Right cardiac atrium (tissue), 5 donors: ENCODE measurements at regions of chr9 and their contacts with region 1.

Region 1: GRCh38 chr9:104863180-104863883 is 64.6 kb downstream of the ABCA1 start:
- DNase-seq: peak in 2 of 3 donors; percentile 34 to 66
- ATAC-seq: peak; percentile 75 to 84
- H3K4me3 ChIP-seq: no peak overlapping the region
- H3K27ac ChIP-seq: no peak overlapping the region
- H3K4me1 ChIP-seq: no peaks in the 10 kb centered on the region
- H3K27me3 ChIP-seq: no peaks in the 10 kb centered on the region

Region 2: GRCh38 chr9:104694218-104694617 is 169.1 kb before region 1 on chr9 and contains the start of gene OR13D1:
- intact Hi-C with region 1: no loop called
- DNase-seq: no peak
- ATAC-seq: no peak
- H3K4me3 ChIP-seq: no peak within 1 kb of the TSS
- H3K27ac ChIP-seq: no peak within 1 kb of the TSS
- H3K4me1 ChIP-seq: no peaks in the 10 kb centered on the region
- H3K27me3 ChIP-seq: no peaks in the 10 kb centered on the region
- total RNA-seq, gene OR13D1: not detected

Region 3: DNA sequence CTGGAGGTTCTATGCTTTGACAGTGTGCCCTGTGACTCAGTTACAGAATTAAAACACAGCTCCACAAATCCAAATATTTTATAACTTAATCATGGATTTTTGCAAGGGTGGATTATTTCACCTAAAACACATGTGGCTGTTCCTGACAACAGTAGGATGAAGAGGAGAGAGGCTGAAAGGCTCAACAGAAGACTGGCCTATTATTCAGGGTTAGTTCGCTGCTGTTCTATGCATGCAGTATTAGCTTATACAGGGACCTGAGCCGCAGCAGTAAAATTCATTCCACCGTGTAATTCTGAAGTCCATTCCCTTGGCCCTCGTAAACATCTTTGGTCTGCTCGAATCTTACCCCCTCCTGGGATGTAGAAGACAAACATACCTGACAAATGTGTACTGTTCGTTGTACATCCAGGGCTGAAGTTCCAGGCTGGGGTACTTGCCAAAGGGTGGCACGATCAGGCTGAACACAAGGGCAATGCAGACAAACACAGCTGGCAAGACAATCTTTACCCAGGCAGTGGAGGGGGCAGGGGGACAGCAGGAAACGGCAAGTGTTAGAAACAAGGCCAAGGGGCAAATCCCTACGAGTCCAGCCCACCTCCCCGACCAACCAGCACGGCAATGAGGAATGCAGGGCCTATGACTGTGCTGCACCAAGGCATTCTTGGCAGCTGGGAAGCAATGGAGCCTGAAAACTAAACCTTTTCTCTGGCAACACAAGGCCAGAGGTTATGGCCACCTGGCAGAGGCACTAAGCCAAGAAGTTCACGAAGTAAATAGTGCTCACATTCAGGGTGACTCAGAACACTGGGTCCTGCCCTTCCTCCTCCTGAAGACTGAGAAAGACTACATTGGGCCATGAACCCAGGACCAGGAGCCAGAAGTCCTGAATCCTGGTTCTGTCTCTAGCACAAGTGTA is 52.7 kb before region 1 on chr9:
- intact Hi-C with region 1: no loop called
- DNase-seq: no peak
- ATAC-seq: peak in 1 of 2 donors; percentile 43
- H3K4me3 ChIP-seq: no peak overlapping the region
- H3K27ac ChIP-seq: no peak overlapping the region
- H3K4me1 ChIP-seq: no peaks in the 10 kb centered on the region
- H3K27me3 ChIP-seq: no peaks in the 10 kb centered on the region

Region 4: GRCh38 chr9:104911032-104911607 is 47.8 kb after region 1 on chr9:
- intact Hi-C with region 1: loop called in 2 of 4 experiments (anchors 10 kb)
- DNase-seq: no peak
- ATAC-seq: no peak
- H3K4me3 ChIP-seq: no peak overlapping the region
- H3K27ac ChIP-seq: no peak overlapping the region
- H3K4me1 ChIP-seq: peaks cover 20% of the 10 kb centered on the region
- H3K27me3 ChIP-seq: no peaks in the 10 kb centered on the region

Region 5: GRCh38 chr9:105157130-105157583 is 293.8 kb after region 1 on chr9:
- intact Hi-C with region 1: loop called in 3 of 4 experiments (anchors 5 kb)
- DNase-seq: peak; percentile 51 to 77 (median 70)
- ATAC-seq: peak; percentile 91 to 94
- H3K4me3 ChIP-seq: no peak overlapping the region
- H3K27ac ChIP-seq: no peak overlapping the region
- H3K4me1 ChIP-seq: no peaks in the 10 kb centered on the region
- H3K27me3 ChIP-seq: no peaks in the 10 kb centered on the region